Activated CD4-positive, alpha-beta memory T cell treated with anti-CD3 and anti-CD28 coated beads for 36 hours (primary cell): ENCODE measurements at regions of chr2 and their contacts with region 1.

Region 1: GRCh38 chr2:112996635-112997034 is 8.6 kb upstream of the IL36A start:
- DNase-seq: peak; percentile 84
- H3K4me3 Mint-ChIP-seq: no peak overlapping the region
- H3K27ac Mint-ChIP-seq: peak overlapping the region; percentile 30
- H3K4me1 Mint-ChIP-seq: peaks cover 28% of the 10 kb centered on the region
- H3K27me3 Mint-ChIP-seq: no peaks in the 10 kb centered on the region

Region 2: GRCh38 chr2:112980537-112980936 is 16.1 kb before region 1 on chr2:
- CTCF ChIA-PET with region 1: no interaction called
- POLR2A ChIA-PET with region 1: interaction called, 3 read pairs
- intact Hi-C with region 1: loop called (anchors 2 kb)
- DNase-seq: no peak
- H3K4me3 Mint-ChIP-seq: no peak overlapping the region
- H3K27ac Mint-ChIP-seq: no peak overlapping the region
- H3K4me1 Mint-ChIP-seq: peaks cover 27% of the 10 kb centered on the region
- H3K27me3 Mint-ChIP-seq: peaks cover 4% of the 10 kb centered on the region

Region 3: GRCh38 chr2:113157118-113157896 is 160.7 kb after region 1 on chr2:
- CTCF ChIA-PET with region 1: no interaction called
- POLR2A ChIA-PET with region 1: no interaction called
- intact Hi-C with region 1: no loop called
- DNase-seq: peak; percentile 66
- H3K4me3 Mint-ChIP-seq: peak overlapping the region; percentile 81
- H3K27ac Mint-ChIP-seq: peak overlapping the region; percentile 79
- H3K4me1 Mint-ChIP-seq: peaks cover 22% of the 10 kb centered on the region
- H3K27me3 Mint-ChIP-seq: no peaks in the 10 kb centered on the region